ENCODE measurements at regions of chr17 and their contacts with region 1.

Region 1: GRCh38 chr17:28967221-28968140 is 16.2 kb upstream of the PHF12 start:
- DNase-seq: no peak
- H3K4me3 ChIP-seq: no peak overlapping the region
- H3K27ac ChIP-seq: peak overlapping the region in 1 of 3 donors; percentile 10
- H3K4me1 ChIP-seq: peaks cover 0 to 8% of the 10 kb centered on the region in 2 donors
- H3K27me3 ChIP-seq: no peaks in the 10 kb centered on the region
- CTCF ChIP-seq: no peak
- POLR2A ChIP-seq: no peak

Region 2: GRCh38 chr17:29111816-29112499 is 144.5 kb after region 1 on chr17:
- intact Hi-C with region 1: loop called (anchors 2 kb)
- DNase-seq: peak; percentile 62 to 74
- H3K4me3 ChIP-seq: no peak overlapping the region
- H3K27ac ChIP-seq: peak overlapping the region in 2 of 3 donors; percentile 48 to 57
- H3K4me1 ChIP-seq: peaks cover 7 to 38% of the 10 kb centered on the region in 2 donors
- H3K27me3 ChIP-seq: no peaks in the 10 kb centered on the region
- CTCF ChIP-seq: peak; percentile 41 to 93 (median 76)
- POLR2A ChIP-seq: no peak